ENCODE measurements at regions of chr19 and their contacts with region 1.

Region 1: DNA sequence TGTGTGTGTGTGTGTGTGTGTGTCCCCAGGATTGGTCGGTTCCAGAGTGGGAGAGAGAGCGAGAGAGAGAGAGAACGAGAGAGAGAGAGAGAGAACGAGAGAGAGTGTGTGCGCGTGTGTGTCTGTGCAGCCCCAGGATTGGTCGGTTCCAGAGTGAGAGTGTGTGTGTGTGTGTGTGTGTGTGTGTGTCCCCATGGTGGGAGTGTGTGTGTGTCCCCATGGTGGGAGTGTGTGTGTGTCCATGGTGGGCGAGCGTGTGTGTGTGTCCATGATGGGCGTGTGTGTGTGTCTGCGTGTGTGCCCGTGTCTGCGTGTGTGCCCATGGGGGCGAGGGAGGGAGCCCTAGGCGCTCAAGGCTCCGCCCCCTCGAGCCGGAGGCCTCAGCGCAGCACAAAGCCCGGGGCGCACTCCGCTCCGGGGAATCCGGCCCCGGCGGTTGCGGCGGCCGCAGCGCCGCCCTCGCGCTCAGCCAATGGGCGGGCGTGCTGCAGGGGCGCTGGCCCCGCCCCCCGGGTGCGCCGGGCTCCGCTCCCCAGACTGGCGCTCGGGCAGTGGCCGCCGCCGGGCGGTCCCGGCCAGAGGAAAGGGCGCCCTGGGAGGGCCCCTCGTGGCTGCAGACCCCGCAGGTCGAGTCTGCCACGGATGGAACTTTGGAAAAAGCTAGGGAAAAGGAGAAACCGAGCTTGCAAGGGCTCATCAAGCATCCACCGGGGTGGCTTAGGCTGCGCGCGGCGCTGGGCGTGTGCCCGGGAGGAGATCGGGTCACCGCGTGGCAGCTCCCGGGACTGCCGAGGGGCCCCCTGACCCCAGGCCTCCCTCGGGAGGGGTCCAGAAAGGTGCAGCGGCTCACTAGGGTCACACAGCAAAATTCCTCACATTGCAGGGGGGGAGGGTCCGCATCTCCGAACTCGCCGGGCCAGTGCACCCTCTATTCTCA is 96.2 kb downstream of the INSR start:
- DNase-seq: peak; percentile 90
- ATAC-seq: peak; percentile 83
- H3K4me3 Mint-ChIP-seq: peak overlapping the region; percentile 89
- H3K27ac Mint-ChIP-seq: peak overlapping the region; percentile 96
- H3K4me1 Mint-ChIP-seq: peaks cover 23% of the 10 kb centered on the region
- H3K27me3 Mint-ChIP-seq: peaks cover 2% of the 10 kb centered on the region
- CTCF ChIP-seq: no peak

Region 2: GRCh38 chr19:6925801-6926751 is 272.0 kb before region 1 on chr19:
- CTCF ChIA-PET with region 1: no interaction called
- POLR2A ChIA-PET with region 1: no interaction called
- intact Hi-C with region 1: no loop called
- DNase-seq: no peak
- ATAC-seq: no peak
- H3K4me3 Mint-ChIP-seq: peak overlapping the region; percentile 37
- H3K27ac Mint-ChIP-seq: no peak overlapping the region
- H3K4me1 Mint-ChIP-seq: no peaks in the 10 kb centered on the region
- H3K27me3 Mint-ChIP-seq: no peaks in the 10 kb centered on the region
- CTCF ChIP-seq: no peak

Region 3: GRCh38 chr19:7152568-7152967 is 45.5 kb before region 1 on chr19:
- CTCF ChIA-PET with region 1: interaction called, 3 read pairs
- POLR2A ChIA-PET with region 1: no interaction called
- intact Hi-C with region 1: loop called (anchors 1 kb)
- DNase-seq: no peak
- ATAC-seq: no peak
- H3K4me3 Mint-ChIP-seq: no peak overlapping the region
- H3K27ac Mint-ChIP-seq: no peak overlapping the region
- H3K4me1 Mint-ChIP-seq: peaks cover 5% of the 10 kb centered on the region
- H3K27me3 Mint-ChIP-seq: no peaks in the 10 kb centered on the region
- CTCF ChIP-seq: no peak

Region 4: GRCh38 chr19:7179917-7180306 is 18.1 kb before region 1 on chr19:
- CTCF ChIA-PET with region 1: interaction called, 4 read pairs
- POLR2A ChIA-PET with region 1: interaction called, 7 read pairs
- intact Hi-C with region 1: loop called (anchors 1 kb)
- DNase-seq: no peak
- ATAC-seq: no peak
- H3K4me3 Mint-ChIP-seq: no peak overlapping the region
- H3K27ac Mint-ChIP-seq: no peak overlapping the region
- H3K4me1 Mint-ChIP-seq: peaks cover 47% of the 10 kb centered on the region
- H3K27me3 Mint-ChIP-seq: peaks cover 2% of the 10 kb centered on the region
- CTCF ChIP-seq: no peak

Region 5: DNA sequence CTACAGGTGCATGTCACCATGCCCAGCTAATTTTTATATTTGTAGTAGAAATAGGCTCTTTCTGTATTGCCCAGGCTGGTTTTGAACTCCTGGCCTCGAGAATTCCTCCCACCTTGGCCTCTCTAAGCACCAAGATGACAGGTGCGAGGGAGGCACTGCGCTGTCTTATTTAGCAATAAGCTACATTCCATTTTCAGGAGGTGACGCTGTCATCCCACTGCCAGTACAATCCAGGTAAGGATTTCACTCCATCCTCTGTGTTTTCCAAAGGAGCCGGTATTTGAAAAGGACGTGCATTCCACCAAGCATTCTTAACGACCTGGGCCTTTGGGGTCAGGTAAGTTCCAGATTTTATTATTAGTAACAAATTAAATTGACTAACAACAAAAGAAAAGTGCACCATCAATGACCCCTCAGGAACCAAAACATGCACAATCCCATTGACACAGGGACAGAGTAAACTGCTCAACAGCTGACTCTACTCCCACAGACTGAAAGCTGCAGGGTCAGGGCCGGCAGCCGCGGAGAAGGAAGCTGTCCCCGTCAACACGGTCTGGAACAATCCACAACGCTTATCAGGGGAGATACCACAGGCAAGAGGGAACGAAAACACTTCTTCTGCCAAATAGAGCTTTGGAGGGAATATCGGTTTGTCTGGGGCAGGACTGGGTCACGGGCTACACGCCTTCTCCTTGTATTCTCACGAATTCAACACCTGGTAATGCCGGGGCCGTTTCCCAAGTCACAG is 13.3 kb after region 1 on chr19:
- CTCF ChIA-PET with region 1: interaction called, 4 read pairs
- POLR2A ChIA-PET with region 1: interaction called, 10 read pairs
- intact Hi-C with region 1: no loop called
- DNase-seq: no peak
- ATAC-seq: no peak
- H3K4me3 Mint-ChIP-seq: no peak overlapping the region
- H3K27ac Mint-ChIP-seq: no peak overlapping the region
- H3K4me1 Mint-ChIP-seq: peaks cover 41% of the 10 kb centered on the region
- H3K27me3 Mint-ChIP-seq: peaks cover 6% of the 10 kb centered on the region
- CTCF ChIP-seq: no peak

Region 6: GRCh38 chr19:7293795-7294570 is 96.0 kb after region 1 on chr19 and contains the start of gene INSR:
- CTCF ChIA-PET with region 1: no interaction called
- POLR2A ChIA-PET with region 1: interaction called, 3 read pairs
- intact Hi-C with region 1: loop called (anchors 1 kb)
- DNase-seq: peak; percentile 48
- ATAC-seq: peak; percentile 79
- H3K4me3 Mint-ChIP-seq: peak within 1 kb of the TSS; percentile 77
- H3K27ac Mint-ChIP-seq: no peak within 1 kb of the TSS
- H3K4me1 Mint-ChIP-seq: peaks cover 24% of the 10 kb centered on the region
- H3K27me3 Mint-ChIP-seq: peaks cover 27% of the 10 kb centered on the region
- CTCF ChIP-seq: no peak
- total RNA-seq, gene INSR: 3.2 and 3.3 TPM in 2 replicates

Region 7: GRCh38 chr19:7376151-7376852 is 178.3 kb after region 1 on chr19:
- CTCF ChIA-PET with region 1: interaction called, 6 read pairs
- POLR2A ChIA-PET with region 1: no interaction called
- intact Hi-C with region 1: loop called (anchors 1 kb)
- DNase-seq: no peak
- ATAC-seq: no peak
- H3K4me3 Mint-ChIP-seq: no peak overlapping the region
- H3K27ac Mint-ChIP-seq: peak overlapping the region; percentile 41
- H3K4me1 Mint-ChIP-seq: peaks cover 8% of the 10 kb centered on the region
- H3K27me3 Mint-ChIP-seq: no peaks in the 10 kb centered on the region
- CTCF ChIP-seq: no peak

Region 8: DNA sequence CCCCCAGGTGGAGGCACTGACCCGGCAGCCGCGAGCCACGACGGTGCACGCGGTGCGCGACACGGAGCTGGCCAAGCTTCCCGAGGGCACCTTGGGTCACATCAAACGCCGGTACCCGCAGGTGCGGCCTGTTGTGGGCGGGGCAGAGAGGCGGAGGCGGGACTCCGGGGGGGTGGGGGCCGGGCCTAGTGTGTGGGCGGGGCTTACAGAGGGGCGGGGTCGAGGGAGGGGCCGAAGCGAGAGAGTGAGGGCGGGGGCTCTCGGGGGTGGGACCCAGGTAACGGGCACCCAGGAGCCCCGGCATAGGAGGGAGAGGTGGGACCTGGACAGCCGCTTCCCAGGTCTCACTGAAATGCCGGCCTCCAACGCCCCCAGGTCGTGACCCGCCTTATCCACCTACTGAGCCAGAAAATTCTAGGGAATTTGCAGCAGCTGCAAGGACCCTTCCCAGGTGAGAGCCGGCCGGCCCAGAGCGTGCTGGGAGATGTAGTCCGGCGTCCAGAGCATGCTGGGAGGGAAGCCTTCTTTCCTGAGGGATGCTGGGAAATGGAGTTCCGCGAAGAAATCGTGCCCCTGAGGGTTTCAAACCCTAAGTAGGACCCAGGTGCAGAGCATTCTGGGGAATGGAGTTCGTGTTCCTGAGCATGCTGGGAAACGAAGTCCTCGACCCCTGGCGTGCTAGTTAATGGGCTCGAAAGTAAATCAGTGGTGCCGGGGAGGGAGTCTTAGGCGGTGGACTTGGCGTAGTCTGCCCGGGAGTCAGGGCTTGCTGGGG is 353.1 kb after region 1 on chr19:
- CTCF ChIA-PET with region 1: no interaction called
- POLR2A ChIA-PET with region 1: no interaction called
- intact Hi-C with region 1: no loop called
- DNase-seq: peak; percentile 22
- ATAC-seq: peak; percentile 81
- H3K4me3 Mint-ChIP-seq: no peak overlapping the region
- H3K27ac Mint-ChIP-seq: no peak overlapping the region
- H3K4me1 Mint-ChIP-seq: peaks cover 3% of the 10 kb centered on the region
- H3K27me3 Mint-ChIP-seq: no peaks in the 10 kb centered on the region
- CTCF ChIP-seq: no peak